Right cardiac atrium (tissue), 5 donors: ENCODE measurements at regions of chr9 and their contacts with region 1.

Region 1: GRCh38 chr9:69672596-69673310 is 582 bp upstream of the APBA1 start:
- DNase-seq: peak; percentile 85 to 94 (median 93)
- ATAC-seq: peak; percentile 94
- H3K4me3 ChIP-seq: peak overlapping the region; percentile 82
- H3K27ac ChIP-seq: peak overlapping the region; percentile 81
- H3K4me1 ChIP-seq: no peaks in the 10 kb centered on the region
- H3K27me3 ChIP-seq: no peaks in the 10 kb centered on the region

Region 2: DNA sequence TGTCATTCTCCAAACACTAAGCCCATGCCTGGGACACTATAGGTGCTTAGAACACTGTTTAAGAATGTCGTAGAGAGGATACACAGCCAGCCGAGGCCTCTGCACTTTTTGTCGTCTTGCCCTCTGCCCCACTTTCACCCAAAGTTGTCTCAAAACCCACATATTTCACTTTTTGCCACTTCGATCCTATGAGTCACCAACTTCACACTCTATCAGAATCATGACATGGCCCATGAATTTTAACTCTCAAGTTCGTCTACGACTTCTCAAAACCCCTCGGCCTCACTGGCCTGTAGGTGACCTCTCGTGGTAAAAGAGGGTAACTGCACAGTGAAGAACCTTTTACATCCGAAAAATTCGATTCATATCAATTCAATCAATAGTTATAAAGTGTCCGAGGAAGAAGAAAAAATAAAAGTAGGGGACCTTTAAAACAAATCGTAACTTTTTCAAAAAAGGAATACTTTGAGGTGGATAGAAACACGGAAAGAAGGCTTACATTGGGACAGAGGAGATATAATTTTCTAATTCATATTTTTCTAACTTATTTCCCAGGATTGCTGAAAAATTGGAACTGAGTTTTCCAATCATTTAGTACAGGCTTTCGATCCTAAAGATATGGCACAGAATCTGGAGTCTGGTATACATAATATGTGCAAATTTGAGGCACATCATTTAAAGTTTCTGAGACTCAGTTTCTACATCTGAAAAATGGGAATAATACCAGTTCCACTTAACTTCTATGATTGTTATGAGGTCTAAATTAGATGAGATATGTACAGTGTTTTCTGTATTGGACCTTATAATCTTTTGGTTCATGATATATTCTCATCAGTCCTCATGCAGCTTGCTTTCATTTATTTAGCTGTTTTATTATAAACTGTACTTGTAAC is 123.2 kb before region 1 on chr9:
- intact Hi-C with region 1: loop called in 1 of 4 experiments (anchors 10 kb)
- DNase-seq: peak in 1 of 3 donors; percentile 36
- ATAC-seq: peak; percentile 43 to 69
- H3K4me3 ChIP-seq: no peak overlapping the region
- H3K27ac ChIP-seq: no peak overlapping the region
- H3K4me1 ChIP-seq: peaks cover 3% of the 10 kb centered on the region
- H3K27me3 ChIP-seq: no peaks in the 10 kb centered on the region

Region 3: GRCh38 chr9:69759421-69760277 is 86.9 kb after region 1 on chr9 and contains the start of gene PTAR1:
- intact Hi-C with region 1: loop called in 1 of 4 experiments (anchors 5 kb)
- DNase-seq: peak; percentile 93 to 98 (median 97)
- ATAC-seq: peak; percentile 97 to 99
- H3K4me3 ChIP-seq: peak within 1 kb of the TSS; percentile 64
- H3K27ac ChIP-seq: peak within 1 kb of the TSS; percentile 94
- H3K4me1 ChIP-seq: peaks cover 3% of the 10 kb centered on the region
- H3K27me3 ChIP-seq: no peaks in the 10 kb centered on the region
- total RNA-seq, gene PTAR1: 27.6 to 38.1 (median 35.0) TPM

Region 4: DNA sequence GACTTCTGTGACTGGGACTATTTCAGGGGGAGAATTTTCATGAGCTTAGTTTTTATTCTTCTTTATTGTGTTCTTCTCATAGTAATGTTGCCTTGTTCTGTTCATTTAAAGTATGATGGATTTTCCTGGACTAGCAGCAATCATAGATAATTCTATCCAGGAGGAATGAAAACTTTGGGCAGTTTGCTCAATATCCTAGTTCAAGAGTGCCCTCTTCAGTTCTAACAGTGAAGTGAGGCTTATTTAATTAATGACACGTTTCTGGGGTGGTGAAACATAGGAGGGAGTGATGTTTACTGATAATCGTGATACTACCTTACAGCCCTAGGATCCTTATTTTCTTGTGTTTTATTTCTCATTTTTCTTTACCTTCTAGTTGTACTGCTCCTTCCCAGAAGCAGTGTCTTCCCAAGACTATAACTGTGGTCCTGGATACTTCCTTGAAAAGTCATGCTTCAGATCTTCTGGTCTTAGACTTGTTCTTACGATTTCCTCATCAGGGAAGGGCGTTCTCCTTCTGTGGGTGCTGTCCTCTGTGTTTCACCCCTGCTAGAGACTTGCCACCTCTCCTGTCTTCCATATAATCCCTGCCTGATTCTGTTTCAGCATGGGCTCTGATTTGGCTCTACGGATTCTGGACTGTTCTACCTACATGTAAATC is 205.2 kb after region 1 on chr9:
- intact Hi-C with region 1: loop called in 2 of 4 experiments (anchors 5 to 10 kb)
- DNase-seq: no peak
- ATAC-seq: peak; percentile 40 to 60
- H3K4me3 ChIP-seq: no peak overlapping the region
- H3K27ac ChIP-seq: no peak overlapping the region
- H3K4me1 ChIP-seq: no peaks in the 10 kb centered on the region
- H3K27me3 ChIP-seq: no peaks in the 10 kb centered on the region